GM12878 (cell line): ENCODE measurements at regions of chr14 and their contacts with region 1.

Region 1: GRCh38 chr14:106872611-106873446 is 1346.4 kb downstream of the TMEM121 start:
- DNase-seq: no peak
- ATAC-seq: peak; percentile 86
- H3K4me3 ChIP-seq: peak overlapping the region; percentile 50; the same call in 1 of the 2 replicates
- H3K27ac ChIP-seq: no peak overlapping the region
- H3K4me1 ChIP-seq: peaks cover 25% of the 10 kb centered on the region
- H3K27me3 ChIP-seq: peaks cover 0 to 2% of the 10 kb centered on the region in 2 experiments; a peak in 2 of 4 replicates
- CTCF ChIP-seq: peak; percentile 62 to 93 (median 75)
- EP300 ChIP-seq: no peak
- POLR2A ChIP-seq: no peak
- RAD21 ChIP-seq: peak; percentile 73

Region 2: DNA sequence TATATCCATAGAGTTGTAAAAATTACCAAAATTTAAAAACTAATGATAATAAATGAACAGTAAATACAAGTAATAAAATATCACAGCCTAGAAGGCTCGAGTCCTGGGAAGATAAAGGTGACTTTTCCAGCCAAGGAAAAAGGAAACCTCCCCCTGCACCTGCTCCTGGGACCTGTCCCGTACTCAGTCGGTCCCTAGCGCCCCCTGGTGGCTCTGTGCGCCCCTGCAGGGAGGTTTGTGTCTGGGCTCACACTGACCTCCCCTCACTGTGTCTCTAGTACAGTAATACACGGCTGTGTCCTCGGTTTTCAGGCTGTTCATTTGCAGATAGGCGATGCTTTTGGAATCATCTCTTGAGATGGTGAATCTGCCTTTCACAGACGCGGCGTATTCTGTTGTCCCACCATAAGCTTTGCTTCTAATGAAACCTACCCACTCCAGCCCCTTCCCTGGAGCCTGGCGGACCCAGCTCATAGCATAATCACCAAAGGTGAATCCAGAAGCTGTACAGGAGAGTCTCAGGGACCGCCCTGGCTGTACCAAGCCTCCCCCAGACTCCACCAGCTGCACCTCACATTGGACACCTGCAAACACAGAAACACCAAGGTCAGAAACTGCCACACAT is 316.1 kb before region 1 on chr14:
- CTCF ChIA-PET with region 1: no interaction called
- POLR2A ChIA-PET with region 1: no interaction called
- RAD21 ChIA-PET with region 1: no interaction called
- SMC1A ChIA-PET with region 1: no interaction called
- in situ Hi-C with region 1: no loop called
- intact Hi-C with region 1: no loop called
- DNase-seq: no peak
- ATAC-seq: peak; percentile 89
- H3K4me3 ChIP-seq: no peak overlapping the region
- H3K27ac ChIP-seq: no peak overlapping the region
- H3K4me1 ChIP-seq: no peaks in the 10 kb centered on the region
- H3K27me3 ChIP-seq: no peaks in the 10 kb centered on the region
- CTCF ChIP-seq: peak; percentile 71 to 94 (median 93)
- EP300 ChIP-seq: no peak
- POLR2A ChIP-seq: no peak
- RAD21 ChIP-seq: peak; percentile 73

Region 3: GRCh38 chr14:106776395-106776983 is 96.3 kb before region 1 on chr14:
- CTCF ChIA-PET with region 1: interaction called, 10 read pairs
- POLR2A ChIA-PET with region 1: interaction called, 3 read pairs
- RAD21 ChIA-PET with region 1: interaction called, 4 read pairs
- SMC1A ChIA-PET with region 1: interaction called, 4 read pairs
- in situ Hi-C with region 1: no loop called
- intact Hi-C with region 1: no loop called
- DNase-seq: no peak
- ATAC-seq: 0 out of 3 replicates have a peak, but pooled peaks have one; percentile 16
- H3K4me3 ChIP-seq: no peak overlapping the region
- H3K27ac ChIP-seq: no peak overlapping the region
- H3K4me1 ChIP-seq: peaks cover 8% of the 10 kb centered on the region
- H3K27me3 ChIP-seq: no peaks in the 10 kb centered on the region
- CTCF ChIP-seq: no peak
- EP300 ChIP-seq: no peak
- POLR2A ChIP-seq: no peak
- RAD21 ChIP-seq: no peak

Region 4: GRCh38 chr14:106823552-106823951 is 49.3 kb before region 1 on chr14:
- CTCF ChIA-PET with region 1: interaction called, 353 read pairs
- POLR2A ChIA-PET with region 1: no interaction called
- RAD21 ChIA-PET with region 1: interaction called, 11 read pairs
- SMC1A ChIA-PET with region 1: interaction called, 6 read pairs
- in situ Hi-C with region 1: no loop called
- intact Hi-C with region 1: no loop called
- DNase-seq: no peak
- ATAC-seq: no peak
- H3K4me3 ChIP-seq: no peak overlapping the region
- H3K27ac ChIP-seq: no peak overlapping the region
- H3K4me1 ChIP-seq: peaks cover 20% of the 10 kb centered on the region
- H3K27me3 ChIP-seq: no peaks in the 10 kb centered on the region; a peak in 1 of 4 replicates
- CTCF ChIP-seq: no peak
- EP300 ChIP-seq: no peak
- POLR2A ChIP-seq: no peak
- RAD21 ChIP-seq: no peak

Region 5: GRCh38 chr14:106844608-106845285 is 28.1 kb before region 1 on chr14:
- CTCF ChIA-PET with region 1: interaction called, 605 read pairs
- POLR2A ChIA-PET with region 1: interaction called, 8 read pairs
- RAD21 ChIA-PET with region 1: interaction called, 119 read pairs
- SMC1A ChIA-PET with region 1: interaction called, 244 read pairs
- in situ Hi-C with region 1: no loop called
- intact Hi-C with region 1: no loop called
- DNase-seq: no peak
- ATAC-seq: peak; percentile 71
- H3K4me3 ChIP-seq: peak overlapping the region; percentile 80
- H3K27ac ChIP-seq: peak overlapping the region; percentile 88
- H3K4me1 ChIP-seq: peaks cover 30% of the 10 kb centered on the region
- H3K27me3 ChIP-seq: no peaks in the 10 kb centered on the region
- CTCF ChIP-seq: no peak
- EP300 ChIP-seq: peak in 1 of 2 experiments; percentile 16; a peak in 1 of 4 replicates
- POLR2A ChIP-seq: peak; percentile 77
- RAD21 ChIP-seq: no peak